ENCODE measurements at regions of chr2 and their contacts with region 1.

Region 1: DNA sequence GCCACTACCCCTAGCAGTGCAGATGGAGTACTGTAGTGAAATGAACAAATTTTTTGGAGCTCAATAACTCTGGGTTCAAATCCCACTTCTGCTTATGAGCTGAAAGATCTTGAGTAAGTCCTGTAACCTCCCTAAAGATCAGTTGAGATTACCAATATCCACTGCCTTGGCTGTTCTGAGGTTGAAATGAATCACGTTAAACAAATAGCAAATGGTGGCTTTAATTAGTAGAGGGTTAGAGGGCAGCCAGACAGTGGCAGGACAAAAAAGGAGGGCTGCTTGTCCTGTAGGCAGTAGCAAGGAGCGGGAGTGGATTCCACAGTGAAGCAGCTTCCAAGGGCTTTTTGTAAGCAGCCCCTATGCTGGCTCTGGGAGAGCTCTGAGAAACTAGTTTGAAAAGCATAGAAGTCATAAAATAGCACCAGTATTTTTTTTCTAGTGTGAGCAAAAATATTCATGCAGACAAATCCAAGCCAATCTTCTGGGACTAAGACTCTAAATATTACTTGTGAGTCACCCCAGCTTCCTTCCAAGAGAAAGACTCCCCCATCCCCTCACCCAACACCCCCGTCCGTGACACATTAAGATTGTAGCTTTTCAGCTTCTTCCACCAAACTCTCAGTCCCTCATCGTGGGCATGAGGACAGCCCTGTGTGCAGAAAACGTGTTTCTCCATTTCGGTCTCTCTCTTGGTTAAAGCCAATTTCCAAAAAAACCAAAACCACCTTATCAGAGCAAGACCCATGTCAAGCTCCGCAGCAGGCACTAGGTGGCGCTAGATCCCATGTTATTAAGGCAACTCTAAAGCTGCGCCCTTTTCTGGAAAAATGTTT is 123.5 kb upstream of the LGALSL start:
- DNase-seq: peak; percentile 67
- H3K4me3 ChIP-seq: peak overlapping the region; percentile 48
- H3K27ac ChIP-seq: peak overlapping the region; percentile 72
- H3K4me1 ChIP-seq: peaks cover 45% of the 10 kb centered on the region
- H3K27me3 ChIP-seq: no peaks in the 10 kb centered on the region
- CTCF ChIP-seq: peak; percentile 91

Region 2: DNA sequence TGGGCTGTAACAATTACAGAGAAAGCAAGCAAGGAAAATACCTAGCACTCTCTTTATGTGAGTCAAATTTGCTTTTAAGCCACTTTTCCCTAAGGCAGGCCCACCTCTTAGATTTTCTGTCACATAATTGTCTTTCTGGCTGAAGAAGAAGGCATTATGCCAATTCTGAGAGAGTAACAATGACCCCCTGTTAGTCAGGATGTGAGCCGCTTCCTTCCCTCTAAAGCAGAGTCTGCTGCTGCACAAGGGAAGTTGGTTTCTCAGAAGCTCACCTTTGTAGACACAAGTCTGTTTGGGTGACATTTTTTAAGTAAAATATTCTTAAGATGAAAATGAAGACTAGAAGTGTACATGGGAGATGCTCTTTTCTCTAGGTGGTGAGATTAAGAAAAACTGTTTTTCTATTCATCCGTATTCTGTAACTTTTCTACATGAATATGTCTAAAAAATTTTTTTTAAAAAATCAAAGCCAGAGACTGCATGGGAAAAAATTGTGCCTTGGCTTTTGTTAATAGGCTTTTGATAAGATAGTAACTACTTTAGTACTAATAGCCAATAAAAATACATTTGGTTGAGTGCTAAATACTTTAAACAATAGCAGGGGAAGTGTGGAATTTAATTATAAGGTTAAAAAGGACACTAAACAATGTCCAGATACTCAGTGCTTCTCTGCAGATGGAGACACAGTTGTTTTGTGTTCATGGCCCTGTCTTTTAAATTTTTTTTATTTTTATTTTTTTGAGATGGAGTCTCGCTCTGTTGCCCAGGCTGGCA is 277.8 kb before region 1 on chr2:
- intact Hi-C with region 1: loop called (anchors 5 kb)
- DNase-seq: no peak
- H3K4me3 ChIP-seq: no peak overlapping the region
- H3K27ac ChIP-seq: peak overlapping the region; percentile 78
- H3K4me1 ChIP-seq: peaks cover 14% of the 10 kb centered on the region
- H3K27me3 ChIP-seq: peaks cover 3% of the 10 kb centered on the region
- CTCF ChIP-seq: no peak

Region 3: GRCh38 chr2:64383016-64383591 is 52.6 kb after region 1 on chr2:
- intact Hi-C with region 1: no loop called
- DNase-seq: no peak
- H3K4me3 ChIP-seq: no peak overlapping the region
- H3K27ac ChIP-seq: no peak overlapping the region
- H3K4me1 ChIP-seq: no peaks in the 10 kb centered on the region
- H3K27me3 ChIP-seq: peaks cover 39% of the 10 kb centered on the region
- CTCF ChIP-seq: no peak

Region 4: DNA sequence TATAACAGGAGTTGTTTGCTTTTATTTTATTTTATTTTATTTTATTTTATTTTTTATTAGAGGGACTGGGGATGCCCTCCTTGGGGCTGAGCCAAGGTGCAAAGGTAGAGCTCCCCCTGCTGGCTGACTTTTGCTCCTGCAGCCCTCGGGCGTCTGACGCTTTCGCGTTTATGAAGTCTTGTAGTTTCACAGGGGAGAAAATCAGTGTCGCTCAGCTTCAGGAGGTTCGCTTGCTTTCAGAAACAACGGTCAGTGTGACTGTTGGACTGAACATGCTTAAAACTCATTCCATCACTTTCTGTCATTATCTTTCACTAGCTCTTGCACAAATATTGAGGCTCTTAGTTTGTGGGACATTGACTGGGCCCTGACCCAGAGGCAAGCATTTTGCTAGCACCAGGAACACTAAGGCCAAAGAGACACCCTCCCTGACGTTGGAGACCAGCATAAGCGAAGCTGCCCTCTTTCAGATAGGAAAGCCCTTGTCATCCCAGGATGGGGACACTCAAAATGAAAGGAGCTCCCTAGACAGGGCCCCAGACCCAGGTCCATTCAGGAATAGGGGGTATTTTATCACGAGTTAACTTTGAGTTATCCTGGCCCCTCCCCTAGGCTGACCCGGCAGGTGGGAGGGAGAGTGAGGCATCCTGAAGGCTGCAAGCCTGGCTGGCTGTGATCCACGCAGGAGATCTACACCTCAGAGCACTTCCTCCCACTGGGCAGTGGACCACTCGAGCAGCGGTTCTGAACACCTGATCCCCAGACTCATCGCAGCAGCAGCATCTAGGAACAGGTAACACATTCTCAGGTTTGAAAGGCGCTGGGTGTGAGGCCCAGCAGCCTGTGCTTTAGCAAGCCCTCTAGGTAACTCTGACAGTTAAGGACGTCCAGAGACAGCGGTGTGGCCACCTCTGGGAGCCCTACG is 157.8 kb after region 1 on chr2:
- intact Hi-C with region 1: loop called (anchors 5 kb)
- DNase-seq: peak; percentile 59
- H3K4me3 ChIP-seq: no peak overlapping the region
- H3K27ac ChIP-seq: no peak overlapping the region
- H3K4me1 ChIP-seq: peaks cover 26% of the 10 kb centered on the region
- H3K27me3 ChIP-seq: no peaks in the 10 kb centered on the region
- CTCF ChIP-seq: peak; percentile 98

Region 5: GRCh38 chr2:64562148-64562784 is 231.8 kb after region 1 on chr2:
- intact Hi-C with region 1: loop called (anchors 10 kb)
- DNase-seq: no peak
- H3K4me3 ChIP-seq: no peak overlapping the region
- H3K27ac ChIP-seq: no peak overlapping the region
- H3K4me1 ChIP-seq: peaks cover 10% of the 10 kb centered on the region
- H3K27me3 ChIP-seq: no peaks in the 10 kb centered on the region
- CTCF ChIP-seq: peak; percentile 56

Region 6: DNA sequence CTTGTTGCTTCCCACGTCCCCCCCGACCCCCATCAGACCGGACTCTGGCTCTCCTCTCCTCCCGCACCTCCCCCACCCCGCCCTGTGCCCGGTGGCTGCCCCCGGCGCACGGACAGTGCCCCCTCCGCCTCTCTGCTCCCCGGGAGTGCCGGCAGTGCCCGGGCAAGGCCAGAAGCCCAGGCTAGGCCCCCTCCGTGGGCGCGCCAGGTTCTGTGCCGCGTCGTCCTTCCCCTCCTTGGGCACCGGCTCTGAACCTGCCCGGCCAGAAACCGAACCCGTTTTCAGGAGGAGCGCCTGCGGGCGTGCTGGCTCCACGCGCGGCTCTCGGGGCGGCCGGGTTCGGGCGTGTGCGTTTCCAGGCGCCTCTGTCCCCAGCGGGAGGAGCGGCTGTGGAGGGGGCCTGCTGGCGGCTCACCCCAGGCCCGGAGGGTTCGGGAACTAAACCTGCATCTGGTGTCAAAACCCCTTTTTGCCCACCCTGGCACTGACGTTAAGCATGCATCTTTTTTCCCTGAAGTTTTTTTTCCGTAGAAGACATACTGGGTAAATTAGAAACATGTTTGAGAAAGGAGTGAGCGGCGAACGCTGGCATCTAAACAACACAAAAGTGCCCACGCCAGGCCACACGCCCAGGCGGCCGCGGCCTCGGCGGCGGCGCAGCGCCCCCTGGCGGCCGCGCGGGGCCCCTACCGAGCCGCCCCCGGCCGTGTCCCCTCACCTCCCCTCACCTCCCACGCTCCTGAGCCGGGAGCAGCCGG is 534.8 kb after region 1 on chr2:
- intact Hi-C with region 1: loop called (anchors 5 kb)
- DNase-seq: peak; percentile 61
- H3K4me3 ChIP-seq: peak overlapping the region; percentile 76
- H3K27ac ChIP-seq: peak overlapping the region; percentile 84
- H3K4me1 ChIP-seq: peaks cover 24% of the 10 kb centered on the region
- H3K27me3 ChIP-seq: peaks cover 6% of the 10 kb centered on the region
- CTCF ChIP-seq: peak; percentile 93